ENCODE measurements at regions of chr10 and their contacts with region 1.

Region 1: GRCh38 chr10:58993480-58994221 is 182.8 kb upstream of the PHYHIPL start:
- DNase-seq: peak; percentile 63
- ATAC-seq: peak; percentile 88
- H3K4me3 ChIP-seq: no peak overlapping the region
- H3K27ac ChIP-seq: peak overlapping the region; percentile 31; the same call in 1 of the 2 replicates
- H3K4me1 ChIP-seq: peaks cover 38% of the 10 kb centered on the region
- H3K27me3 ChIP-seq: no peaks in the 10 kb centered on the region
- CTCF ChIP-seq: no peak
- EP300 ChIP-seq: peak; percentile 75 to 95; a peak in 3 of 4 replicates
- POLR2A ChIP-seq: no peak
- RAD21 ChIP-seq: peak; percentile 19; the same call in 1 of the 2 replicates

Region 2: DNA sequence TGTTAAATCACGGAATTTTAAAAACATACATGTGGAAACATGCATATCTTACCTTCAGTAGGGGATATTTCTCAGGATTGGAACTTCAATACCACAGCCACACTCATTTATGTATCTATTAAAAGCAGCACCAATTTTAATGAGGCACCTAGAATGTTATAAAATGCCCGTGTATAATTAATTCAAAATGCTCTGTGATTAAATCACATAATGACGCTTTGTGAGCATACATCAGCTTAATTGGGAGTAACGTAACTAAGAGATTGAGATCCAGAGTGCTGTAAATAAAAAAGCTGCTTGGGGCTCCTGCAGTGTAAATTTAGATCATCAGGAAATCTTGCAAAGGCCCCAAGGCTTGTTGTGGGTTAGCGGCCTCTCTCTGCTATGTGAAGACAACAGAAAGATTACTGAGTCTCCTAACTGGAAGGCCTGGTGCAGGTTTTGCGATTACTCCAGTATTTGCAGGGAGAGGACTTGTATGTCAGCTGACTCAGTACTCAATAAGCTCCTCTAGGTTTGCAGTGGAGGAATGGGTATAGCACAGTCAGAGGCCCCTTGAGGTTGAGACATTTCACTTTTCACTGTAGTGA is 12.7 kb before region 1 on chr10:
- CTCF ChIA-PET with region 1: interaction called, 21 read pairs
- POLR2A ChIA-PET with region 1: interaction called, 19 read pairs
- RAD21 ChIA-PET with region 1: interaction called, 69 read pairs
- SMC1A ChIA-PET with region 1: interaction called, 52 read pairs
- in situ Hi-C with region 1: no loop called
- intact Hi-C with region 1: no loop called
- DNase-seq: no peak
- ATAC-seq: peak; percentile 45; the same call in 2 of the 3 replicates
- H3K4me3 ChIP-seq: no peak overlapping the region
- H3K27ac ChIP-seq: no peak overlapping the region
- H3K4me1 ChIP-seq: no peaks in the 10 kb centered on the region
- H3K27me3 ChIP-seq: no peaks in the 10 kb centered on the region
- CTCF ChIP-seq: no peak
- EP300 ChIP-seq: no peak
- POLR2A ChIP-seq: no peak
- RAD21 ChIP-seq: no peak

Region 3: GRCh38 chr10:59012839-59013238 is 19.2 kb after region 1 on chr10:
- CTCF ChIA-PET with region 1: interaction called, 20 read pairs
- POLR2A ChIA-PET with region 1: interaction called, 10 read pairs
- RAD21 ChIA-PET with region 1: interaction called, 223 read pairs
- SMC1A ChIA-PET with region 1: interaction called, 222 read pairs
- in situ Hi-C with region 1: no loop called
- intact Hi-C with region 1: no loop called
- DNase-seq: no peak
- ATAC-seq: peak; percentile 79
- H3K4me3 ChIP-seq: no peak overlapping the region
- H3K27ac ChIP-seq: no peak overlapping the region
- H3K4me1 ChIP-seq: no peaks in the 10 kb centered on the region; the same call in 1 of the 2 replicates
- H3K27me3 ChIP-seq: no peaks in the 10 kb centered on the region
- CTCF ChIP-seq: no peak
- EP300 ChIP-seq: 0 out of 4 replicates have a peak, but pooled peaks of 1 of the 2 experiments have one; percentile 10
- POLR2A ChIP-seq: no peak
- RAD21 ChIP-seq: no peak

Region 4: GRCh38 chr10:59036311-59037017 is 42.8 kb after region 1 on chr10:
- CTCF ChIA-PET with region 1: interaction called, 4 read pairs
- POLR2A ChIA-PET with region 1: interaction called, 9 read pairs
- RAD21 ChIA-PET with region 1: interaction called, 139 read pairs
- SMC1A ChIA-PET with region 1: interaction called, 78 read pairs
- in situ Hi-C with region 1: no loop called
- intact Hi-C with region 1: no loop called
- DNase-seq: peak; percentile 55
- ATAC-seq: peak; percentile 99
- H3K4me3 ChIP-seq: 0 out of 2 replicates have a peak overlapping the region, but pooled peaks have one; percentile 20
- H3K27ac ChIP-seq: peak overlapping the region; percentile 39; the same call in 1 of the 2 replicates
- H3K4me1 ChIP-seq: peaks cover 13% of the 10 kb centered on the region
- H3K27me3 ChIP-seq: no peaks in the 10 kb centered on the region
- CTCF ChIP-seq: no peak
- EP300 ChIP-seq: peak in 1 of 2 experiments; percentile 71; a peak in 3 of 4 replicates
- POLR2A ChIP-seq: no peak
- RAD21 ChIP-seq: no peak

Region 5: DNA sequence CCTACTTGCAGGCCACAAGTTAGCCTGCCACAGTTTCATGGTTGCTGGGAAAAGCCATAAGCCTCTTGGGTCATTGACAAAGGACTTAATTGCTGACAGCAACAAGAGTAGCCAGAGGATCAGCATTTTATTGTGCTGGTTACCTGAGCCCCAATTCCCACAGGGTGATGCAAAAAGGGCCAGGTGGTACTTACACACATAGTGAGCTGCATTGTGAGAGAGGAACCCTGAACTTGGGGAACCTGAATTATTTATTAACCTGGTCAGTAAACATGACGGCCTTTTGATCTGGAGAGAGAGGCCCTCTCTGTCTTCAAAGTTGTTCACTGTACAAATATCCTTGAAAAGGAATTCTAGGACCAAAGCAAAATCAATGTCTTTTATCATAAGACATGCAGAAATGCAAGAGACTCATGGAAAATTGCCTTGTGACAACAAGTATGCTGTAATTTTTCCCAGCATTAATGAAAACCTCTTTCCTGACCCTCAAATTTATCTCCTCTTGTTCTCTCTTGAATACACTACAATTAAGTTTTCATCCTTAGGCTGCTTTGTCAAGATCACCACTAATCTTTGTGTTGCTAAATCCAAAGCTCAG is 79.9 kb after region 1 on chr10:
- CTCF ChIA-PET with region 1: interaction called, 3 read pairs
- POLR2A ChIA-PET with region 1: interaction called, 3 read pairs
- RAD21 ChIA-PET with region 1: interaction called, 17 read pairs
- SMC1A ChIA-PET with region 1: interaction called, 8 read pairs
- in situ Hi-C with region 1: no loop called
- intact Hi-C with region 1: no loop called
- DNase-seq: no peak
- ATAC-seq: peak; percentile 14; the same call in 1 of the 3 replicates
- H3K4me3 ChIP-seq: no peak overlapping the region
- H3K27ac ChIP-seq: no peak overlapping the region
- H3K4me1 ChIP-seq: no peaks in the 10 kb centered on the region
- H3K27me3 ChIP-seq: no peaks in the 10 kb centered on the region
- CTCF ChIP-seq: no peak
- EP300 ChIP-seq: no peak
- POLR2A ChIP-seq: no peak
- RAD21 ChIP-seq: no peak

Region 6: DNA sequence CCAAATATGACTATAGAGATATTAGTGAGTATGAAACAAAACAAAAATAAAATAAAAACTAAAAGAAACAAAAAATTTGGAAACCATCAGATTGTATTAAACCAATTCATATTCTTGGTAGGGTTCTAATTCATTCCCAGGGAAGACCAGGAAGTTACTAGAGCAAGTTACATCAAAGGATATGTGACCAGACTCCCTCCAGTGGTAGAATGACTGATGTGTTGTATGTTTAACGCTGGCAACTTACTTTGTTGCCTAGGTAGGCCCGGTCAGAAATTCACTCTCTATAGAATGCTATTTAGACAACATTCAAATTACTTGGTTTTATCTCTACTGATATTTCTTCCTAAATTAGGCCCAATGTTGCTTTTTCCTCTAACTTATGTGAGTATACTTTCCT is 188.0 kb after region 1 on chr10:
- CTCF ChIA-PET with region 1: interaction called, 8 read pairs
- POLR2A ChIA-PET with region 1: no interaction called
- RAD21 ChIA-PET with region 1: interaction called, 7 read pairs
- SMC1A ChIA-PET with region 1: interaction called, 10 read pairs
- in situ Hi-C with region 1: no loop called
- intact Hi-C with region 1: no loop called
- DNase-seq: peak; percentile 17
- ATAC-seq: peak; percentile 90
- H3K4me3 ChIP-seq: no peak overlapping the region
- H3K27ac ChIP-seq: no peak overlapping the region
- H3K4me1 ChIP-seq: no peaks in the 10 kb centered on the region
- H3K27me3 ChIP-seq: peaks cover 0 to 4% of the 10 kb centered on the region in 2 experiments; a peak in 1 of 4 replicates
- CTCF ChIP-seq: peak; percentile 37 to 67 (median 55); a peak in 5 of 6 replicates
- EP300 ChIP-seq: no peak
- POLR2A ChIP-seq: no peak
- RAD21 ChIP-seq: peak; percentile 80

Region 7: GRCh38 chr10:59465088-59465487 is 471.4 kb after region 1 on chr10:
- CTCF ChIA-PET with region 1: no interaction called
- POLR2A ChIA-PET with region 1: no interaction called
- RAD21 ChIA-PET with region 1: no interaction called
- SMC1A ChIA-PET with region 1: no interaction called
- in situ Hi-C with region 1: no loop called
- intact Hi-C with region 1: no loop called
- DNase-seq: no peak
- ATAC-seq: no peak
- H3K4me3 ChIP-seq: no peak overlapping the region
- H3K27ac ChIP-seq: no peak overlapping the region
- H3K4me1 ChIP-seq: no peaks in the 10 kb centered on the region
- H3K27me3 ChIP-seq: no peaks in the 10 kb centered on the region
- CTCF ChIP-seq: peak in 1 of 3 experiments; percentile 19; a peak in 1 of 6 replicates
- EP300 ChIP-seq: no peak
- POLR2A ChIP-seq: no peak
- RAD21 ChIP-seq: no peak